ENCODE measurements at regions of chr15 and their contacts with region 1.

Region 1: DNA sequence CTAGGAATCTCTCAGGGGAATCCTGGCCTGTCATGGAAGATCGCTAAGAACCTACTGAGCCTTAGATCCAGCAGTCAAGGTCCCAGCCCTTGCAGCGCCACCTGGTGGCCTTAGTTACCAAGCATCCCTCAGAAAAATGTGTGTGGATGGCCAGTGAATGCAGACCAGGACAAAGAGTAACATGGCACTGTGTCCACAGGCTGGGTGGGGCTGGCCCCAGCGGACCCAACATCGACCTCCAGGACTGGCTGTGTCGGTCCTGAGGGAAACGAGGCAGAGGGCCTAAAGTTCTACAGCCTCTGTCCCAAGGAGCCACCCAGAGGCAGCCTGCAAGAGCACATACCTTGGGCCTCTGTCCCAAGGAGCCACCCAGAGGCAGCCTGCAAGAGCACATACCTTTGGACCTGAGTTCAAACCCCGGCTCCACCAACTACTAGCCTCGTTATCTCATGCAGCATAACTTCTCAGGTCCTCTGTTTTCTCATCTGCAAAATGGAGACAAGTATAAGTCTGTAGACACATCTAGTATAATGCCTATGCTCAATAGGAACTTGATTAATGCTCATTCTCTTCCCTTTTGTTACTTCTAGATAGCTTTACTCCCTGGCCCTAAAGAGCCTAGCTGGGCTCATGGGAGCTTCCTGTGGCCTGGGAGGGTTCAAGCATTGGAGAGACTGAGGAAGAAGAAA is 57.5 kb upstream of the HERC1 start:
- DNase-seq: peak; percentile 88
- ATAC-seq: peak; percentile 53
- H3K4me3 Mint-ChIP-seq: no peak overlapping the region
- H3K27ac Mint-ChIP-seq: no peak overlapping the region
- H3K4me1 Mint-ChIP-seq: peaks cover 56% of the 10 kb centered on the region
- H3K27me3 Mint-ChIP-seq: no peaks in the 10 kb centered on the region

Region 2: DNA sequence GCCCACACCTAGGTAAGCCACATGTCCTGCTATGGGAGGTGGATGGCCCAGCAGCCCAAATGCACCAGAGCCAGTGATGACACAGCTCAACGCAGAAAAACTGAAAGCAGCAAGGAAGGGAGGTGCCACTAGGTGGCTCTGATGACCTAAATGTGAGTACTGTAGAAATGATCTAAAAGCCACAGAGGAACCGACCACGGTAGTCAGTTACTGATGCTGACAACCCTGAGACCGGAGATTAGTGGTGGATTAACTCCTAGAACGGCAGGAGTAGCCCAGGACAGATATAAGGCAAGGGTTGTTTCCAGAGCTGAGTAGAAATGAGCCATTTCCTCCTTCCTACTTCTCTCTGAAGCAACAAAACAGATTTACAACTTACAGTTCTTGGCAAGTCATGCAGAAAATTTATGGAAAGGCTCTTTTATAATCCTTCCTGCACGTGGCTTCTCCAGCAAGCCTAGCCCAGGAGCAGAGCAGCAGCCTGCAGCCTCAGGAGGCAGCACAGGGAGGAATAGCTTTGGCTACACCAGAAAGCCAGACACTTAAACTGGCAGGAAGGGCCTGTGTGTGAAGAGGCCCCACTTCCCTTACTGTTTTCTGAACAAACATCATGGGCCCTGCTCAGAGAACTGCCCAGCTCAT is 280.9 kb before region 1 on chr15:
- CTCF ChIA-PET with region 1: interaction called, 4 read pairs
- POLR2A ChIA-PET with region 1: interaction called, 3 read pairs
- intact Hi-C with region 1: loop called (anchors 1 to 5 kb)
- DNase-seq: peak; percentile 88
- ATAC-seq: peak; percentile 79
- H3K4me3 Mint-ChIP-seq: no peak overlapping the region
- H3K27ac Mint-ChIP-seq: peak overlapping the region; percentile 88
- H3K4me1 Mint-ChIP-seq: peaks cover 39% of the 10 kb centered on the region
- H3K27me3 Mint-ChIP-seq: no peaks in the 10 kb centered on the region

Region 3: DNA sequence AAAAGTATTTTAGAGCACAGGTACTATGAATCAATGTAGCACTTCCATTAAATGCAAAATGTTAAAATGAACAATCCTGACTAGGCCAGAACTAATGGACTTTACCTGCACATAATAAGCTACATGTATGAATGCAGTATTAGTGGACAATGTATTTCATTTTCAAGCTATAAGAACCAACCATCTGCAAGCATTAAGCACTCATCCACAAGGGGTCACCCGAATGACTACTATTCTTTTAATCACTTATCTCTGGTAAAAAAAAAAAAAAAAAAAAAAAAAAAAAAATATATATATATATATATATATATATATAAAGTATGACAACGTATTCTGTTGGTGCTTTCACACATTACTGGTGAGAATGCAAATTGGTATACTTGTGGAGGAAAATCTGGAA is 64.7 kb before region 1 on chr15:
- CTCF ChIA-PET with region 1: interaction called, 14 read pairs
- POLR2A ChIA-PET with region 1: no interaction called
- intact Hi-C with region 1: loop called in 1 of 2 experiments (anchors 1 kb)
- DNase-seq: peak; percentile 41
- ATAC-seq: no peak
- H3K4me3 Mint-ChIP-seq: no peak overlapping the region
- H3K27ac Mint-ChIP-seq: peak overlapping the region; percentile 74
- H3K4me1 Mint-ChIP-seq: peaks cover 79% of the 10 kb centered on the region
- H3K27me3 Mint-ChIP-seq: no peaks in the 10 kb centered on the region

Region 4: GRCh38 chr15:63945007-63945788 is 54.0 kb after region 1 on chr15:
- CTCF ChIA-PET with region 1: interaction called, 18 read pairs
- POLR2A ChIA-PET with region 1: no interaction called
- intact Hi-C with region 1: no loop called
- DNase-seq: peak; percentile 85
- ATAC-seq: peak; percentile 97
- H3K4me3 Mint-ChIP-seq: no peak overlapping the region
- H3K27ac Mint-ChIP-seq: peak overlapping the region; percentile 51
- H3K4me1 Mint-ChIP-seq: peaks cover 4% of the 10 kb centered on the region
- H3K27me3 Mint-ChIP-seq: no peaks in the 10 kb centered on the region

Region 5: GRCh38 chr15:64046347-64047153 is 155.3 kb after region 1 on chr15 and contains the start of gene DAPK2:
- CTCF ChIA-PET with region 1: interaction called, 5 read pairs
- POLR2A ChIA-PET with region 1: no interaction called
- intact Hi-C with region 1: loop called (anchors 2 to 5 kb)
- DNase-seq: peak; percentile 73
- ATAC-seq: peak; percentile 90
- H3K4me3 Mint-ChIP-seq: peak within 1 kb of the TSS; percentile 64
- H3K27ac Mint-ChIP-seq: no peak within 1 kb of the TSS
- H3K4me1 Mint-ChIP-seq: peaks cover 7% of the 10 kb centered on the region
- H3K27me3 Mint-ChIP-seq: peaks cover 18% of the 10 kb centered on the region
- total RNA-seq, gene DAPK2: 1.0 to 1.3 TPM

Region 6: GRCh38 chr15:65156692-65157091 is 1265.5 kb after region 1 on chr15:
- CTCF ChIA-PET with region 1: no interaction called
- POLR2A ChIA-PET with region 1: no interaction called
- intact Hi-C with region 1: no loop called
- DNase-seq: no peak
- ATAC-seq: no peak
- H3K4me3 Mint-ChIP-seq: no peak overlapping the region
- H3K27ac Mint-ChIP-seq: no peak overlapping the region
- H3K4me1 Mint-ChIP-seq: no peaks in the 10 kb centered on the region
- H3K27me3 Mint-ChIP-seq: no peaks in the 10 kb centered on the region

Measured in activated CD4-positive, alpha-beta T cell treated with anti-CD3 and anti-CD28 coated beads for 36 hours (primary cell).